ENCODE measurements at regions of chr16 and their contacts with region 1.

Region 1: GRCh38 chr16:85275533-85276249 is 163.4 kb upstream of the CIBAR2 start:
- DNase-seq: peak; percentile 80
- ATAC-seq: peak; percentile 92
- H3K4me3 Mint-ChIP-seq: no peak overlapping the region
- H3K27ac Mint-ChIP-seq: no peak overlapping the region
- H3K4me1 Mint-ChIP-seq: no peaks in the 10 kb centered on the region
- H3K27me3 Mint-ChIP-seq: no peaks in the 10 kb centered on the region

Region 2: DNA sequence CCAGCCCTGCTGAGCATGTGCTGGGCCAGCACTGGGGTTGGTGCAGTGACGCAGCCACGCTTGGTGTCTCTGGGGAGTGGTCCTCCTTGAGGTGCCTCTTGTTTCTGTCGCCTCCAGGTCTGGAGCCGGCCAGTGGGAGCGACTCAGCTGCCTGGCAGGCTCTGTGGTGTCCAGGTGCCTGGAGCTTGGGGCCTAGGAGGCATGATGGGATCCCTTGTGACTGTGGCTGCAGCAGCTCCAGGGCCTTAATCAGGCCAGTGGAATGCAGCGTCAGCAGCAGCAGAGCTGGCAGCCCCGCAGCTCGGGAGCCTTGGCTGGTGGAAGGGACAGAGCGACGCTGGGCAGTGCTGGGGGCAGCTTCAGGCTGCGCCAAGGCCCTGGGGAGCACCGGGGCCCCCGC is 88.7 kb before region 1 on chr16:
- CTCF ChIA-PET with region 1: no interaction called
- POLR2A ChIA-PET with region 1: no interaction called
- DNase-seq: no peak
- ATAC-seq: no peak
- H3K4me3 Mint-ChIP-seq: no peak overlapping the region
- H3K27ac Mint-ChIP-seq: no peak overlapping the region
- H3K4me1 Mint-ChIP-seq: no peaks in the 10 kb centered on the region
- H3K27me3 Mint-ChIP-seq: peaks cover 8% of the 10 kb centered on the region

Region 3: DNA sequence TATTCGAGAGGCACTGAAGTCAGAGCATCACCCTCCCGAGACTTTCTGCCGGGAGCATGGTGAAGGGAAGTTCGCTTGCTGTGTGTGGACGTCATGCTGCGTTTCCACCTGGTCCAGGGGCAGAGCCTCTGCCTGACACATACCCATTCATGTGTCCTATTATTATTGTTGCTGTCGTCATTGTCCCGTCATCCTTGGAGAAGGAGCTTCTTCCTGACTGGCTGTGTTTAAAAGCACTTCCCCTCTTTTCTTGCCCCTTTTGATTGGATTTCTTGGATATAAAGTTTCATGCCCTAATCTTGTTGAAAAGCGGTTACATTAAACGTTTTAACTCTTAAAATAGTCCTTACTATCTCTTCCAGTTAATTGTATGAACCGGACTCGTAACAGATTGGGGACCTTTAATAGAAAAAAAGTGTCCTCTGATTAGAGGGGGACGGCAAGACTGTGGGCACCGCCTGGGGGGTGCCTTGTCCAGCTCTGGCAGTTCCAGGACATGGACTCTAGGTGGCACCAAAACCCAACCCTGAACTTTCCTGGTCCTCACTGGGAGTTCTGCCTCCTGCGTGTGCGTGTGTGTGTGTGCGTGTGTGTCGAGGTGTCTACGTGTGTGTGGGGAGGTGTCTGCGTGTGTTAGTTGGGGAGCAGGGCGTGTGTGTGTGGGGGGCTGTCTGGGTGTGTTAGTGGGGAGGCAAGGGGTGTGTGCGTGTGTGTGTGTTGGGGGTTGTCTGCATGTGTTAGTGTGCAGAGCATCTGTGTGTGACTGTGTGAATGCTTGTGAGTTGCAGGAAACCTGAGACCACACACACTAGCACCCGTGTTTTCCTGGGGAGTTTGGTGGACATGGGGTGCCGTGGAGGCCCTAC is 30.2 kb before region 1 on chr16:
- CTCF ChIA-PET with region 1: interaction called, 10 read pairs
- POLR2A ChIA-PET with region 1: no interaction called
- DNase-seq: peak; percentile 70
- ATAC-seq: peak; percentile 67
- H3K4me3 Mint-ChIP-seq: no peak overlapping the region
- H3K27ac Mint-ChIP-seq: peak overlapping the region; percentile 16
- H3K4me1 Mint-ChIP-seq: peaks cover 10% of the 10 kb centered on the region
- H3K27me3 Mint-ChIP-seq: peaks cover 6% of the 10 kb centered on the region

Region 4: GRCh38 chr16:85253084-85253941 is 22.4 kb before region 1 on chr16:
- CTCF ChIA-PET with region 1: interaction called, 25 read pairs
- POLR2A ChIA-PET with region 1: no interaction called
- DNase-seq: peak; percentile 73
- ATAC-seq: peak; percentile 88
- H3K4me3 Mint-ChIP-seq: no peak overlapping the region
- H3K27ac Mint-ChIP-seq: no peak overlapping the region
- H3K4me1 Mint-ChIP-seq: peaks cover 23% of the 10 kb centered on the region
- H3K27me3 Mint-ChIP-seq: peaks cover 10% of the 10 kb centered on the region